Activated naive CD4-positive, alpha-beta T cell treated with anti-CD3 and anti-CD28 coated beads for 36 hours (primary cell): ENCODE measurements at regions of chr17 and their contacts with region 1.

Region 1: DNA sequence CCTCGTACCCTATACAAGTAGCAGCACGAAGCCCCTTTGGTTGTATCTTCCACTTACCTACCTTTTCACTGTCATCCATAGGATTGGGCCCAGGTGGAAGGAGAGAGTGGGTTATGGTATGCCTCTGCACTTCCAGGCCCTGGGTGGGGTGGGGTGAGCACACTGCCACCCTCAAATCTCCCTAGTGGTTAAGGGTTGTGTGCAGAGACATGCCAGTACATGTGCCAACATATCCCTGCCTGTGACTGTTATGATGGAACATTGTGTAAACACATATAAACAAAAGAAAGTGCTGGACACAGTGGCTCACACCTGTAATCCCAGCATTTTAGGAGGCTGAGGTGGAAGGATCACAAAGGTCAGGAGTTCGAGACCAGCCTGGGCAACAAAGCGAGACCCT is 11.1 kb downstream of the HROB start:
- DNase-seq: no peak
- H3K4me3 Mint-ChIP-seq: no peak overlapping the region
- H3K27ac Mint-ChIP-seq: no peak overlapping the region
- H3K4me1 Mint-ChIP-seq: no peaks in the 10 kb centered on the region
- H3K27me3 Mint-ChIP-seq: no peaks in the 10 kb centered on the region

Region 2: DNA sequence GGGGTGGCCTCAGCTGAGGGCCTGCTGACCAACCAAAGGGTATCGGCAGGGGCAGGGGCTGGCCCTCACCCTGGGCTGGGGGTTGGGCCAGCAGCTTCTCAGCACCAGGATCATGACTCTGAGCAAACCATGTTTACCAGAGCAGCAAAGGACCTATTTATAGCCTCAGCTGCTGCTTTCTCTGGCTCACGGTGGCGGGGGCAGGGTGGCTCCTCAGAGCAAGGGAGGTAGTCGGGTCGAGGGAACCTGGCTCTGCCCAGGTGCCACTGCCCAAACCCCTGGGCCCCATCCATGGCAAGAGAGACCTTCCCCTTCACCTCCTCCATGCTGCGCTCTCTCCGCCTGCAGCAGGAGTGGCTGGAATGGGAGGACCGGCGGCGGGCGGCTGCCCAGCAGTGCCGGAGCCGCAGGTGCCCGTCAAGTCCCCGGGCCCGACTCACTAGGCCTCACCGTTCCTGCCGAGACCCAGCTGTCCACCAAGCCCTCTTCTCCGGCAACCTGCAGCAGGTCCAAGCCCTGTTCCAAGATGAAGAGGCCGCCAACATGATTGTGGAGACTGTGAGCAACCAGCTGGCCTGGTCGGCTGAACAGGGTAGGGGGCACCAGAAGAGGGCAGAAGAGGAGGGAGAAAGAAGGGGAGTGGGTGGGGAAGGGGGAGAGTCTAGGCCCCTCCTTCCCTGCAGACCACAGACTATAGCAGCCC is 17.8 kb after region 1 on chr17 and contains the start of gene ASB16:
- CTCF ChIA-PET with region 1: interaction called, 16 read pairs
- intact Hi-C with region 1: no loop called
- DNase-seq: no peak
- H3K4me3 Mint-ChIP-seq: no peak within 1 kb of the TSS
- H3K27ac Mint-ChIP-seq: no peak within 1 kb of the TSS
- H3K4me1 Mint-ChIP-seq: peaks cover 6% of the 10 kb centered on the region
- H3K27me3 Mint-ChIP-seq: no peaks in the 10 kb centered on the region
- total RNA-seq, gene ASB16: 0.12 TPM in 1 of 2 experiments, not detected in the other